GM12878 (cell line): ENCODE measurements at regions of chr16 and their contacts with region 1.

Region 1: GRCh38 chr16:88681709-88682451 is 4.4 kb downstream of the SNAI3 start:
- DNase-seq: peak; percentile 84
- ATAC-seq: peak; percentile 84
- H3K4me3 ChIP-seq: peak overlapping the region; percentile 65
- H3K27ac ChIP-seq: peak overlapping the region; percentile 92
- H3K4me1 ChIP-seq: peaks cover 40% of the 10 kb centered on the region
- H3K27me3 ChIP-seq: no peaks in the 10 kb centered on the region
- CTCF ChIP-seq: no peak
- EP300 ChIP-seq: peak; percentile 89 to 95; a peak in 3 of 4 replicates
- POLR2A ChIP-seq: peak; percentile 78
- RAD21 ChIP-seq: no peak

Region 2: GRCh38 chr16:88650749-88651275 is 31.1 kb before region 1 on chr16 and contains the start of gene CYBA:
- CTCF ChIA-PET with region 1: interaction called, 3 read pairs
- POLR2A ChIA-PET with region 1: interaction called, 8 read pairs
- RAD21 ChIA-PET with region 1: no interaction called
- SMC1A ChIA-PET with region 1: no interaction called
- in situ Hi-C with region 1: no loop called
- intact Hi-C with region 1: loop called (anchors 2 kb)
- DNase-seq: peak; percentile 49
- ATAC-seq: peak; percentile 84
- H3K4me3 ChIP-seq: peak within 1 kb of the TSS; percentile 98
- H3K27ac ChIP-seq: peak within 1 kb of the TSS; percentile 96
- H3K4me1 ChIP-seq: peaks cover 22% of the 10 kb centered on the region
- H3K27me3 ChIP-seq: no peaks in the 10 kb centered on the region
- CTCF ChIP-seq: no peak
- EP300 ChIP-seq: no peak
- POLR2A ChIP-seq: peak; percentile 85
- RAD21 ChIP-seq: no peak
- polyA plus RNA-seq, gene CYBA: 0.55 to 0.66 TPM

Region 3: GRCh38 chr16:88662843-88663606 is 18.9 kb before region 1 on chr16 and contains the start of gene MVD:
- CTCF ChIA-PET with region 1: interaction called, 12 read pairs
- POLR2A ChIA-PET with region 1: interaction called, 12 read pairs
- RAD21 ChIA-PET with region 1: interaction called, 6 read pairs
- SMC1A ChIA-PET with region 1: interaction called, 5 read pairs
- in situ Hi-C with region 1: no loop called
- intact Hi-C with region 1: loop called (anchors 1 kb)
- DNase-seq: peak; percentile 96
- ATAC-seq: peak; percentile 98
- H3K4me3 ChIP-seq: peak within 1 kb of the TSS; percentile 98
- H3K27ac ChIP-seq: peak within 1 kb of the TSS; percentile 83
- H3K4me1 ChIP-seq: peaks cover 6% of the 10 kb centered on the region; the same call in 1 of the 2 replicates
- H3K27me3 ChIP-seq: no peaks in the 10 kb centered on the region
- CTCF ChIP-seq: 0 out of 6 replicates have a peak, but pooled peaks of 1 of the 3 experiments have one; percentile 4
- EP300 ChIP-seq: no peak
- POLR2A ChIP-seq: peak; percentile 95
- RAD21 ChIP-seq: no peak
- polyA plus RNA-seq, gene MVD: 5.0 to 6.8 TPM

Region 4: DNA sequence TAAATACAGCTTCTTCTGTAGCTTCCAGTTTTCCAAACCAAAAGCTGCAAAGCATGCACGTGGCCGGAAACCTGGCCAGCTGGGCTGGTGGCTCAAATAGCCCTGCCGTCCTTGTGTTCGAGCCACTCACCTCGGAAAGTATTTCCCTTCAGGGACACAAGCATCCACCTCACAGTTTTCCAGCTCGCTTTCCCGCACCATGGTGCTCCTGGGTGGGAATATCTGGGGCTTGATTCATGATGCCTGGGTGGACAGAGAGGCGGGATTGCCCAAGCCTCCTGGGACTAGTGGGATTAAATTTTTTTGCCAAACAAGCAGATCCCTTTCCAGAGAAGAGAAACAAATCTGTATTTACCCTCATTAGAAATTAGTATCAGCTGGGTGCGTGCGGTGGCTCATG is 11.9 kb before region 1 on chr16:
- CTCF ChIA-PET with region 1: interaction called, 23 read pairs
- POLR2A ChIA-PET with region 1: interaction called, 12 read pairs
- RAD21 ChIA-PET with region 1: interaction called, 5 read pairs
- SMC1A ChIA-PET with region 1: interaction called, 4 read pairs
- in situ Hi-C with region 1: no loop called
- intact Hi-C with region 1: no loop called
- DNase-seq: no peak
- ATAC-seq: no peak
- H3K4me3 ChIP-seq: no peak overlapping the region
- H3K27ac ChIP-seq: no peak overlapping the region
- H3K4me1 ChIP-seq: no peaks in the 10 kb centered on the region; the same call in 1 of the 2 replicates
- H3K27me3 ChIP-seq: no peaks in the 10 kb centered on the region
- CTCF ChIP-seq: no peak
- EP300 ChIP-seq: no peak
- POLR2A ChIP-seq: no peak
- RAD21 ChIP-seq: no peak

Region 5: DNA sequence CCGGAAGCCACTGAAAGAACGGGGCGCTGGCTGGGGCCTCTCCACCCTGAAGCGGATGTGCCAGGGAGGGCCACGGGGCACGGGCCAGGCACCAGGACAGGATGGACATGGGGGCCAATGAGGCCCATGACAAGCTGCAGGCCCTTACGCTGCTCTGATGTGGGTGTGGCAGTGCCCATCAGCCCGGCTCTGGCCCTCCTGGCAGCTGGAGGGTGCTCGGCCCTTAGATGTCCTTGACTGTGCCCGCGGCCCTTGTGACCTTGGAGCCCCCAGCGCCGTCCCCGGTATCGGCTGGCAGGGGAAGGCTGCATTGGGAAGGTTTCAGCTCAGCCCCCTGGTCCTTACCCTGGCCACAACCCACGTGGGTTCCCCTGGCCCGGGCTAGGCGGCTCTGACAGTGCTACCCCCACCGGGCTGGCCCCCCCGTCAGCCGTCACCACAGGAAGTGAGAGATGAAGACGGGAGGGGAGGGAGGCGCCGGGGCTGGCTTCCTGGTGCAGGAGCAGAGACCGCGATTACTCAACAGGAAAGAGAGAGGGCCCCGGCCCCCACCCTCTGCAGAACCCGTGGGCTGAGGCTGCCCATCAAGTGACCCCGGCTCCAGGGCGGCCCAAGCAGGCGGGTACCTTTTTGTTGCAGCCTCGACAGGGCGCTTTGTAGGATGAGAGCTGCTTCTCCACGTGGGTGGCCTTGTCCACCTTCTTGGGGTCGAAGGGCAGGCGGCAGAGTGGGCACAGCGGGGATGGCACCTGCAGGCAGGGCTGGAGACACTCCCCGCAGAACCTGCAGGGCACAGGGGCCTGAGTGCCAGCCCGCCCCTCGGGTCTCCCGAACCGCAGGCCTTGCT is 19.0 kb after region 1 on chr16:
- CTCF ChIA-PET with region 1: interaction called, 26 read pairs
- POLR2A ChIA-PET with region 1: interaction called, 4 read pairs
- RAD21 ChIA-PET with region 1: interaction called, 10 read pairs
- SMC1A ChIA-PET with region 1: interaction called, 13 read pairs
- in situ Hi-C with region 1: no loop called
- intact Hi-C with region 1: loop called (anchors 1 kb)
- DNase-seq: peak; percentile 64
- ATAC-seq: peak; percentile 87
- H3K4me3 ChIP-seq: peak overlapping the region; percentile 90; the same call in 1 of the 2 replicates
- H3K27ac ChIP-seq: peak overlapping the region; percentile 90
- H3K4me1 ChIP-seq: peaks cover 56% of the 10 kb centered on the region
- H3K27me3 ChIP-seq: no peaks in the 10 kb centered on the region
- CTCF ChIP-seq: no peak
- EP300 ChIP-seq: peak; percentile 13 to 34; a peak in 2 of 4 replicates
- POLR2A ChIP-seq: peak; percentile 62; the same call in 1 of the 2 replicates
- RAD21 ChIP-seq: no peak

Region 6: GRCh38 chr16:88706288-88706964 is 24.5 kb after region 1 on chr16 and contains the starts of genes CTU2 and RNF166:
- CTCF ChIA-PET with region 1: interaction called, 26 read pairs
- POLR2A ChIA-PET with region 1: interaction called, 4 read pairs
- RAD21 ChIA-PET with region 1: interaction called, 10 read pairs
- SMC1A ChIA-PET with region 1: interaction called, 13 read pairs
- in situ Hi-C with region 1: no loop called
- intact Hi-C with region 1: loop called (anchors 1 kb)
- DNase-seq: peak; percentile 32
- ATAC-seq: peak; percentile 69
- H3K4me3 ChIP-seq: peak within 1 kb of the TSS; percentile 90
- H3K27ac ChIP-seq: peak within 1 kb of the TSS; percentile 30
- H3K4me1 ChIP-seq: peaks cover 39% of the 10 kb centered on the region
- H3K27me3 ChIP-seq: no peaks in the 10 kb centered on the region
- CTCF ChIP-seq: no peak
- EP300 ChIP-seq: no peak
- POLR2A ChIP-seq: peak; percentile 75; the same call in 1 of the 2 replicates
- RAD21 ChIP-seq: no peak
- polyA plus RNA-seq, gene CTU2: 0.32 to 4.0 TPM
- polyA plus RNA-seq, gene RNF166: 0.48 to 1.3 TPM

Region 7: GRCh38 chr16:88727871-88728270 is 46.0 kb after region 1 on chr16:
- CTCF ChIA-PET with region 1: no interaction called
- POLR2A ChIA-PET with region 1: no interaction called
- RAD21 ChIA-PET with region 1: no interaction called
- SMC1A ChIA-PET with region 1: no interaction called
- in situ Hi-C with region 1: no loop called
- intact Hi-C with region 1: no loop called
- DNase-seq: no peak
- ATAC-seq: no peak
- H3K4me3 ChIP-seq: no peak overlapping the region
- H3K27ac ChIP-seq: no peak overlapping the region
- H3K4me1 ChIP-seq: no peaks in the 10 kb centered on the region
- H3K27me3 ChIP-seq: no peaks in the 10 kb centered on the region
- CTCF ChIP-seq: no peak
- EP300 ChIP-seq: no peak
- POLR2A ChIP-seq: no peak
- RAD21 ChIP-seq: no peak

Region 8: GRCh38 chr16:89246903-89247733 is 565.2 kb after region 1 on chr16:
- CTCF ChIA-PET with region 1: no interaction called
- POLR2A ChIA-PET with region 1: no interaction called
- RAD21 ChIA-PET with region 1: no interaction called
- SMC1A ChIA-PET with region 1: no interaction called
- in situ Hi-C with region 1: no loop called
- intact Hi-C with region 1: no loop called
- DNase-seq: peak; percentile 11
- ATAC-seq: peak; percentile 97
- H3K4me3 ChIP-seq: peak overlapping the region; percentile 60; the same call in 1 of the 2 replicates
- H3K27ac ChIP-seq: no peak overlapping the region
- H3K4me1 ChIP-seq: no peaks in the 10 kb centered on the region
- H3K27me3 ChIP-seq: no peaks in the 10 kb centered on the region
- CTCF ChIP-seq: no peak
- EP300 ChIP-seq: no peak
- POLR2A ChIP-seq: 0 out of 2 replicates have a peak, but pooled peaks have one; percentile 53
- RAD21 ChIP-seq: no peak

Region 9: GRCh38 chr16:89361751-89362539 is 680.1 kb after region 1 on chr16:
- CTCF ChIA-PET with region 1: no interaction called
- POLR2A ChIA-PET with region 1: no interaction called
- RAD21 ChIA-PET with region 1: no interaction called
- SMC1A ChIA-PET with region 1: no interaction called
- in situ Hi-C with region 1: no loop called
- intact Hi-C with region 1: no loop called
- DNase-seq: peak; percentile 87
- ATAC-seq: peak; percentile 80
- H3K4me3 ChIP-seq: peak overlapping the region; percentile 51; the same call in 1 of the 2 replicates
- H3K27ac ChIP-seq: peak overlapping the region; percentile 90
- H3K4me1 ChIP-seq: peaks cover 82% of the 10 kb centered on the region
- H3K27me3 ChIP-seq: no peaks in the 10 kb centered on the region
- CTCF ChIP-seq: no peak
- EP300 ChIP-seq: no peak
- POLR2A ChIP-seq: peak; percentile 62
- RAD21 ChIP-seq: no peak